Activated naive CD4-positive, alpha-beta T cell treated with anti-CD3 and anti-CD28 coated beads for 36 hours (primary cell): ENCODE measurements at regions of chr5 and their contacts with region 1.

Region 1: DNA sequence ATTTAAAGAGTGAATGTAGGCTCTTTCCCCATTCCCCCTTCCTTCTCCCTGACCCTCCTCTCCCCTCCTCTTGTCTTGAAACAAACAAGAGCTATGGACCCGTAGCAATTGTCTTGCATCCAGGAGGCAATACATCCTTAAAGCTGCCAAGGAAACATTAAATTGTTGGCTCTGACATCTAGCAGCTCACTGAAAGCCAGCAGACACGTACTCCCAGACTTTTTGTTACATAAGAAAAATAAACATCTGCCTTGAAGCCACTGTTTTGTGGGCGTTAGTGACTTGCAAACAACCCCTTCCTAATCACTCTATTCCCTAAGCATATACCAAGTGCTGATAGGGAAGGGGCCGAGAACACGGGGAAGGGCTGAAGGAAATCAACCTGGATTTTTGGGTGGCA is 8.6 kb downstream of the SLC45A2 start:
- DNase-seq: no peak
- H3K4me3 Mint-ChIP-seq: no peak overlapping the region
- H3K27ac Mint-ChIP-seq: no peak overlapping the region
- H3K4me1 Mint-ChIP-seq: peaks cover 9% of the 10 kb centered on the region
- H3K27me3 Mint-ChIP-seq: peaks cover 2% of the 10 kb centered on the region

Region 2: GRCh38 chr5:34007621-34008600 is 32.1 kb after region 1 on chr5 and contains the start of gene AMACR:
- CTCF ChIA-PET with region 1: interaction called, 7 read pairs
- intact Hi-C with region 1: loop called (anchors 2 kb)
- DNase-seq: peak; percentile 83
- H3K4me3 Mint-ChIP-seq: peak within 1 kb of the TSS; percentile 75
- H3K27ac Mint-ChIP-seq: peak within 1 kb of the TSS; percentile 89
- H3K4me1 Mint-ChIP-seq: peaks cover 26% of the 10 kb centered on the region
- H3K27me3 Mint-ChIP-seq: no peaks in the 10 kb centered on the region
- total RNA-seq, gene AMACR: 8.6 to 10.1 TPM